WTC11 (cell line): ENCODE measurements at regions of chr17 and their contacts with region 1.

Region 1: GRCh38 chr17:50200457-50201275 is 765 bp downstream of the COL1A1 start:
- DNase-seq: peak; percentile 92
- ATAC-seq: peak; percentile 72
- H3K4me3 Mint-ChIP-seq: peak overlapping the region; percentile 86
- H3K27ac Mint-ChIP-seq: no peak overlapping the region
- H3K4me1 Mint-ChIP-seq: peaks cover 23% of the 10 kb centered on the region
- H3K27me3 Mint-ChIP-seq: peaks cover 54% of the 10 kb centered on the region
- CTCF ChIP-seq: peak; percentile 100

Region 2: GRCh38 chr17:49987681-49988441 is 212.8 kb before region 1 on chr17:
- CTCF ChIA-PET with region 1: no interaction called
- POLR2A ChIA-PET with region 1: no interaction called
- DNase-seq: no peak
- ATAC-seq: peak; percentile 48
- H3K4me3 Mint-ChIP-seq: peak overlapping the region; percentile 27; the same call in 1 of the 2 replicates
- H3K27ac Mint-ChIP-seq: no peak overlapping the region
- H3K4me1 Mint-ChIP-seq: peaks cover 21% of the 10 kb centered on the region
- H3K27me3 Mint-ChIP-seq: peaks cover 94% of the 10 kb centered on the region
- CTCF ChIP-seq: no peak

Region 3: DNA sequence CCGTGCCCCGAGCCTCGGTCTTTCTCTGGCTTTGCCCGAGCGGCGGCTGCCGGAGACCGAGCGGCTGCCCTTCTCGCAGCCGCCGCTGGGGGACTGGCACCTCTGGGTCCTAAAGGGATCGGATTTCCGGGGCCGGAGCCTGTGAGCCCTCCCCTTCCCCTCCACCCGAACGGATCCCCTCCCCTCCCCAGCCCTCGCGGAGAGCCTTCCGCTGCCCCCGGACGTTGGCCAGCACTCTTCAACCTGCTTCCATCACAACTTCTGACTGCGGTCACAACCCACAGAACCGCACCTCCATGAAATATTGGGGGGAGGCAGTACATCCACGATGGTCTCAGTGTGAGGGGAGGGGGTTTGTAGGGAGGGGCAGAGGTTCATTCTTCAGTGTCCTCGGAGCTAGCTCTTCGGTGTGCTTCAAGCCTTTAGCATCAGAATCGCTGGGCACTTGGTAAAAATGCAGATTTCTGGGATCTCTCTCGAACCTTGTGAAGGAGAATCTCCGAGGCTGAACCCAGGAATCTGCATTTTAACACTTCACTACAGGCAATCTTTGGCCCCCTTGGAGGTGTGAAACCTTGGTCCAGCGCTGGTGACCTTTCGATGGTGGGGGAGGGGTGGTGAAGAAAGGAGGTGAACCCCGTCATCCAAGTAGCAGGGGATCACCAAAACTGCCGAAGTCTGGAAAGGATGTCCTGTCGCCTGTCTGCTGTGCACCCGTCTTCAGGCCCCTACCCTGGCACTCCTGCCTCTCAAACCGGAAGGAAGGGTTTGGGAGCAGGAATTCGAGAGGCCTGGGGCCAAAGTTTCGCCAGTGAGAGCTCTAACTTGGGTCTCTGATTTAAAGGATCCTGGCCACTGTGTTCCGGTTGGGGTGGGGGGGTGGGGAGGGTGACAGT is 49.4 kb before region 1 on chr17:
- CTCF ChIA-PET with region 1: interaction called, 16 read pairs
- POLR2A ChIA-PET with region 1: no interaction called
- DNase-seq: peak; percentile 92
- ATAC-seq: peak; percentile 58
- H3K4me3 Mint-ChIP-seq: peak overlapping the region; percentile 75
- H3K27ac Mint-ChIP-seq: peak overlapping the region; percentile 95
- H3K4me1 Mint-ChIP-seq: peaks cover 38% of the 10 kb centered on the region
- H3K27me3 Mint-ChIP-seq: peaks cover 19% of the 10 kb centered on the region
- CTCF ChIP-seq: no peak

Region 4: GRCh38 chr17:50177983-50178834 is 22.5 kb before region 1 on chr17:
- CTCF ChIA-PET with region 1: interaction called, 49 read pairs
- POLR2A ChIA-PET with region 1: interaction called, 7 read pairs
- DNase-seq: peak; percentile 68
- ATAC-seq: peak; percentile 76
- H3K4me3 Mint-ChIP-seq: peak overlapping the region; percentile 56
- H3K27ac Mint-ChIP-seq: peak overlapping the region; percentile 37; the same call in 1 of the 2 replicates
- H3K4me1 Mint-ChIP-seq: peaks cover 31% of the 10 kb centered on the region
- H3K27me3 Mint-ChIP-seq: peaks cover 6% of the 10 kb centered on the region; the same call in 1 of the 2 replicates
- CTCF ChIP-seq: no peak

Region 5: DNA sequence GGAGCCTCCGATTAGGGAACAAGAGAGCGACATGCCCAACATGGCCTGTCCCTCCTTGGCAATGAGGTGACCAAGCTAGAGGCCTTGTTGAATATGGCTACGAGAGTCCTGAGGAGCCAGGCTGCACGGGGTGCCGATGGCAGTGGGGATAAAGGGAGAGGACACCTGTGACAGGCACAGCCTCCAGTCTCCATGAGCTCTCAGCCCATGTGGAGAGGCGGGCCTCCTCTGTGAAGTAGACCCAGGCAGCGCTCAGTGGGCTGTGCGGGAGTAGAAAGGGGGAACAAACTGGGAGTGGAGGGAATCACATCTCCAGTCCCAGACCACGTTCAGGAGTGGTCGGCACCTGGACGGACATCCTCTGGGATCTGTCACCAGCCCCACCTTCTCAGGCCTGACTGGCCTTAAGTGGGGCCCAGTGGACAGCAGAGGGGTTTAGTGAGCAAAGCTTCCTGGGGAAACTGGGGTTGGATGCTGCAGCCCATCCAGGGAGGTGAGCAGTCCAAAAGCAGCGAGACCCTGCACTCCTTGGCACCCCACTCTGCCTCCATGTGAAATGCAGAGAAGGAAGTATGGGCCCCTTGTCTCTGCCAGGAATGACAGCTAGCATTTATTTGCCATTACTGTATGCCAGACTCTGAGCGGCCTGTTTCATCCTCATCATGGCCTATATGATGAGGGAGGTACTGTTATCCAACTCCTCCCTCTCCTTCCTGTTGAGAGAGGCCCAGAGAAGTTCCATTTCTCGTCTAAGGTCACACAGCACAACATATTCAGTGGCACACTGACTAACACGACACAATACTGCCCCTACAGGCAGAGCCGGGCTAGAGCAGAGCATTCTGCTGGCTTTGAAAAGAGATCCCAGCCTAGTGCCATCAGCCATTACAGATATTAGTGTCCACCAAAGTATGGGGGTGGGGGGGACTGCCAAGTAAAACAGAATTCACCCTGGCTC is 69.1 kb after region 1 on chr17:
- CTCF ChIA-PET with region 1: interaction called, 514 read pairs
- POLR2A ChIA-PET with region 1: interaction called, 4 read pairs
- DNase-seq: peak; percentile 81
- ATAC-seq: peak; percentile 54
- H3K4me3 Mint-ChIP-seq: no peak overlapping the region
- H3K27ac Mint-ChIP-seq: no peak overlapping the region
- H3K4me1 Mint-ChIP-seq: peaks cover 38% of the 10 kb centered on the region
- H3K27me3 Mint-ChIP-seq: peaks cover 12% of the 10 kb centered on the region
- CTCF ChIP-seq: peak; percentile 61

Region 6: GRCh38 chr17:50297407-50297865 is 96.8 kb after region 1 on chr17:
- CTCF ChIA-PET with region 1: interaction called, 183 read pairs
- POLR2A ChIA-PET with region 1: interaction called, 9 read pairs
- DNase-seq: peak; percentile 91
- ATAC-seq: peak; percentile 94
- H3K4me3 Mint-ChIP-seq: no peak overlapping the region
- H3K27ac Mint-ChIP-seq: no peak overlapping the region
- H3K4me1 Mint-ChIP-seq: peaks cover 11% of the 10 kb centered on the region
- H3K27me3 Mint-ChIP-seq: peaks cover 7% of the 10 kb centered on the region
- CTCF ChIP-seq: peak; percentile 92

Region 7: DNA sequence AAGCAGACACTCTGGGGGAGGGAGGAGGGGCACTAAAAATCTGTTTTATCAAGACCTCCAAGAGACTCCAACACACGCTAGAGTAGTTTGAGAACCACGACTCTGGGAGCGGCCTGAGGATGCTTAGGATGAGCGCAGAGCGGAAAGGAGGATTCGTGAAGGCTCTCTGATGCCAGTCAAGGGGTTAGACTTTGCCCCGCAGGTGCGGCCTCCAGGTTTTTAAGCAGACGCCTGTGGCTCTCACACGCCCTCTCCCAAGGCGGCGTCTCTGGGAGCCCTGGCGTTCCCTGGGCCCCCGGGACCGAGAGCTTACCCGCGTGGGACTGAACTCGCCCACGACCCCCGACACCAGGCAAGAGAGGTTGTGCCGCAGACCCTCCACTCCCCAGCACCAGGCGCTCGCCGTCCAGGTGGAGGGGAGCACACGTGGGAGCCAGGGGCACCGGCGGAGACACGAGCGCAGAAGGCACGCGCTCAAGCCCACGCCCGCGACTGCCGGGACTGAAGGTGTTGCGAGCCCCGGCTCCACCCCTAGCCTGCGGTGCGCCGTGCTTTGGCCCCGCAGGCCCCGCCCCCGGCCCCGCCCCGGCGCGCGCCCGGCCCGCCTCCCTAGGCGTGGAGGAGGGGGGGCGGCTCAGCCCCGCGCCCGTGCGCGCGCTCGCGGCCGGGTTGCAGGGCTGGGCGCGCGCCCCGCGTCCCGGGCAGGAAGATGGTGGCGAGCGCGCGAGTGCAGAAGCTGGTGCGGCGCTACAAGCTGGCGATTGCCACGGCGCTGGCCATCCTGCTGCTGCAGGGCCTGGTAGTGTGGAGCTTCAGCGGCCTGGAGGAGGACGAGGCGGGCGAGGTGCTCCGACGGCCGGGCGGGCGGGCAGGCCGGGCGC is 145.0 kb after region 1 on chr17 and contains the start of gene XYLT2:
- CTCF ChIA-PET with region 1: interaction called, 26 read pairs
- POLR2A ChIA-PET with region 1: no interaction called
- DNase-seq: peak; percentile 82
- ATAC-seq: peak; percentile 66
- H3K4me3 Mint-ChIP-seq: peak within 1 kb of the TSS; percentile 93
- H3K27ac Mint-ChIP-seq: peak within 1 kb of the TSS; percentile 57; the same call in 1 of the 2 replicates
- H3K4me1 Mint-ChIP-seq: peaks cover 32% of the 10 kb centered on the region
- H3K27me3 Mint-ChIP-seq: peaks cover 14% of the 10 kb centered on the region
- CTCF ChIP-seq: no peak
- total RNA-seq, gene XYLT2: 35.7 to 39.7 TPM (median 37.9 TPM) in 3 replicates